ENCODE measurements at regions of chr5 and their contacts with region 1.

Region 1: DNA sequence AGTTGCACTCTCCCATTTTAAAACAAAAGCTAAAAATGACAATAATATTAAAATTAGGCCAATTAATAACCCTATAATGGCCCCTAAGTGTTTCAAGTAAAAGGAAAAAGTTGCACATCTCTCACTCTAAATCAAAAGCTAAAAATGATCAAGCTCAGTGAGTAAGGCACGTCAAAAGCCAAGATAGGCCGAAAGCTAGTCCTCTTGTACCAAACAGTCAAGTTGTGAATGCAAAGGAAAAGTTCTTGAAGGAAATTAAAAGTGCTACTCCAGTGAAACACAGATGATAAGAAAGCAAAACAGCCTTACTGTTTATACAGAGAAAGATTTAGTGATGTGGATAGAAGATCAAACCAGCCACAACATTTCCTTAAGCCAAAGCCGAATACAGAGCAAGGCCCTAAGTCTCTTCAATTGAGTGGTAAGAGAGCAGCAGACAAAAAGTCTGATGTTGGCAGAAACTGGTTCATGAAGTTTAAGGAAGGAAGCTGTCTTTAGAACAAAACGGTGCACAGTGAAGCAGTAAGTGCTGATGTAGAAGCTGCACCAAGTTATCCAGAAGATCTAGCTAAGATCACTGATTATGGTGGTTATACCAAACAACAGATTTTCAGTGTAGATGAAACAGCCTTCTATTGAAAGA is 144.1 kb upstream of the ACOT12 start:
- DNase-seq: peak; percentile 64
- H3K4me3 Mint-ChIP-seq: no peak overlapping the region
- H3K27ac Mint-ChIP-seq: peak overlapping the region; percentile 5
- H3K4me1 Mint-ChIP-seq: peaks cover 12% of the 10 kb centered on the region
- H3K27me3 Mint-ChIP-seq: no peaks in the 10 kb centered on the region

Region 2: GRCh38 chr5:81525690-81526089 is 12.3 kb before region 1 on chr5:
- intact Hi-C with region 1: no loop called
- DNase-seq: no peak
- H3K4me3 Mint-ChIP-seq: peak overlapping the region; percentile 8
- H3K27ac Mint-ChIP-seq: peak overlapping the region; percentile 82
- H3K4me1 Mint-ChIP-seq: peaks cover 9% of the 10 kb centered on the region
- H3K27me3 Mint-ChIP-seq: no peaks in the 10 kb centered on the region

Region 3: GRCh38 chr5:81552852-81553566 is 15.0 kb after region 1 on chr5:
- intact Hi-C with region 1: no loop called
- DNase-seq: no peak
- H3K4me3 Mint-ChIP-seq: no peak overlapping the region
- H3K27ac Mint-ChIP-seq: no peak overlapping the region
- H3K4me1 Mint-ChIP-seq: peaks cover 18% of the 10 kb centered on the region
- H3K27me3 Mint-ChIP-seq: no peaks in the 10 kb centered on the region

Region 4: GRCh38 chr5:81719743-81720345 is 181.8 kb after region 1 on chr5:
- intact Hi-C with region 1: loop called (anchors 5 kb)
- DNase-seq: no peak
- H3K4me3 Mint-ChIP-seq: no peak overlapping the region
- H3K27ac Mint-ChIP-seq: no peak overlapping the region
- H3K4me1 Mint-ChIP-seq: peaks cover 15% of the 10 kb centered on the region
- H3K27me3 Mint-ChIP-seq: no peaks in the 10 kb centered on the region

Measured in activated CD4-positive, alpha-beta T cell treated with anti-CD3 and anti-CD28 coated beads, Interleukin-2, amount 10 ng/mL, durations not matched to agents 24 days and 14 days (primary cell).